ENCODE measurements at regions of chr3 and their contacts with region 1.

Region 1: DNA sequence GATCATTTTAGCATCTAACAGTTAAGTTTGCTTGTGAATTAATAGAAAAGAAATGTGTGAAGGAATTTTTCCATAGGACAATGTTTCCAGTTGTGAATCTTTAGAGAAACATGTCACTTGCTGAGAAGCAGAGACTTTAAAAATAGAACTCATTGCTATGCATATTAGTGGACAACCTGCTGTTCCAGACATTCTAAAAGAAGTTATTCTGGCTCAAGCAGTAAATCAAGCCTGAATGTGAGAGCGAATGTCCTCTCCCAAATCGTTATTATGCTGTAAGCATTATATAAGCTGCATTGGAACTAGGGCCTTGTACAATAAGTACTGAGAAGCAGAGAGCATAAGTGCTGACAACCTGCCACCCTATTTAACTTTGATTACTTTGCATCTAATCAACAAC is 990.9 kb downstream of the PLOD2 start:
- DNase-seq: no peak
- ATAC-seq: no peak
- H3K4me3 ChIP-seq: no peak overlapping the region
- H3K27ac ChIP-seq: no peak overlapping the region
- H3K4me1 ChIP-seq: no peaks in the 10 kb centered on the region
- H3K27me3 ChIP-seq: no peaks in the 10 kb centered on the region
- CTCF ChIP-seq: no peak

Region 2: GRCh38 chr3:145124900-145125678 is 45.0 kb before region 1 on chr3:
- CTCF ChIA-PET with region 1: no interaction called
- POLR2A ChIA-PET with region 1: no interaction called
- in situ Hi-C with region 1: no loop called
- intact Hi-C with region 1: no loop called
- DNase-seq: no peak
- ATAC-seq: no peak
- H3K4me3 ChIP-seq: no peak overlapping the region
- H3K27ac ChIP-seq: no peak overlapping the region
- H3K4me1 ChIP-seq: no peaks in the 10 kb centered on the region
- H3K27me3 ChIP-seq: no peaks in the 10 kb centered on the region
- CTCF ChIP-seq: no peak

Region 3: GRCh38 chr3:145190138-145190537 is 20.0 kb after region 1 on chr3:
- CTCF ChIA-PET with region 1: no interaction called
- POLR2A ChIA-PET with region 1: interaction called, 12 read pairs
- in situ Hi-C with region 1: no loop called
- intact Hi-C with region 1: no loop called
- DNase-seq: no peak
- ATAC-seq: no peak
- H3K4me3 ChIP-seq: no peak overlapping the region
- H3K27ac ChIP-seq: no peak overlapping the region
- H3K4me1 ChIP-seq: no peaks in the 10 kb centered on the region
- H3K27me3 ChIP-seq: no peaks in the 10 kb centered on the region
- CTCF ChIP-seq: no peak